Dorsolateral prefrontal cortex (tissue), 120 donors: ENCODE measurements at regions of chr2 and their contacts with region 1.

Region 1: DNA sequence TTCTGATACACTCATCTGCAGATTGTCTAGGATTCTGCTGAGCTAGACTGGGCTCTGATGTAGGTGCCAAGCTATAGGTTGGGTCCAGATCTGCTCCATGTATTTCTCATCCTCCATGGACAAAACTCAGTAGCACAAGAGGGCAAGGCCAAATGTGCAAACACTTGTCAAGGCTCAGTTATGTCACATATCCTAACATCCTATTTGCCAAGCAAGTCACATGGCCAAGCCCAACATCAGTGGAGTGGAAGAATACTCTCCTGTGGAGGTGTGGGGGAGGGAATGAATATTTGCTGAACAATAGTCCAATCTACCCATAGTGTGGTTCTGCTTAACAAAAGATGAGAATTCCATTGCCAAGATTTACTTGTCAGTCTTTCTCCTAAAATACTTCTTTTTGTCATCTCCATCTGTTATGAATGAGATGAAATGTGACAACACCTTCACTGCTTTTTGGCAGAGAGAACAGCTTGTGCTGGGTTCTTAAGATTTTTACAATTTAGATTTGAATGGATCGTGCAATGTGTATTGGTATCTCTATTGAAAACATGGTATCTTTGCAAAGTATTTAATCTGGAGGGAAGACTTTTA is 89.9 kb downstream of the OXER1 start:
- DNase-seq: no peak
- H3K4me3 ChIP-seq: no peak overlapping the region
- H3K27ac ChIP-seq: peak overlapping the region in 5 of 59 donors; percentile 3 to 36 (median 12)
- H3K27me3 ChIP-seq: no peaks in the 10 kb centered on the region
- CTCF ChIP-seq: no peak

Region 2: GRCh38 chr2:42726680-42727079 is 52.6 kb after region 1 on chr2:
- intact Hi-C with region 1: no loop called
- DNase-seq: no peak
- H3K4me3 ChIP-seq: no peak overlapping the region
- H3K27ac ChIP-seq: no peak overlapping the region
- H3K27me3 ChIP-seq: no peaks in the 10 kb centered on the region
- CTCF ChIP-seq: no peak

Region 3: GRCh38 chr2:42764096-42764495 is 90.0 kb after region 1 on chr2 and contains the start of gene OXER1:
- intact Hi-C with region 1: loop called in 1 of 2 experiments (anchors 10 kb)
- DNase-seq: no peak
- H3K4me3 ChIP-seq: no peak within 1 kb of the TSS
- H3K27ac ChIP-seq: peak within 1 kb of the TSS in 5 of 59 donors; percentile 3 to 46 (median 36)
- H3K27me3 ChIP-seq: no peaks in the 10 kb centered on the region
- CTCF ChIP-seq: no peak
- total RNA-seq, gene OXER1: 0.21 to 1.7 (median 0.58) TPM in 95 of 120 experiments, not detected in the others